Astrocyte of the cerebellum (primary cell): ENCODE measurements at regions of chr6 and their contacts with region 1.

Region 1: DNA sequence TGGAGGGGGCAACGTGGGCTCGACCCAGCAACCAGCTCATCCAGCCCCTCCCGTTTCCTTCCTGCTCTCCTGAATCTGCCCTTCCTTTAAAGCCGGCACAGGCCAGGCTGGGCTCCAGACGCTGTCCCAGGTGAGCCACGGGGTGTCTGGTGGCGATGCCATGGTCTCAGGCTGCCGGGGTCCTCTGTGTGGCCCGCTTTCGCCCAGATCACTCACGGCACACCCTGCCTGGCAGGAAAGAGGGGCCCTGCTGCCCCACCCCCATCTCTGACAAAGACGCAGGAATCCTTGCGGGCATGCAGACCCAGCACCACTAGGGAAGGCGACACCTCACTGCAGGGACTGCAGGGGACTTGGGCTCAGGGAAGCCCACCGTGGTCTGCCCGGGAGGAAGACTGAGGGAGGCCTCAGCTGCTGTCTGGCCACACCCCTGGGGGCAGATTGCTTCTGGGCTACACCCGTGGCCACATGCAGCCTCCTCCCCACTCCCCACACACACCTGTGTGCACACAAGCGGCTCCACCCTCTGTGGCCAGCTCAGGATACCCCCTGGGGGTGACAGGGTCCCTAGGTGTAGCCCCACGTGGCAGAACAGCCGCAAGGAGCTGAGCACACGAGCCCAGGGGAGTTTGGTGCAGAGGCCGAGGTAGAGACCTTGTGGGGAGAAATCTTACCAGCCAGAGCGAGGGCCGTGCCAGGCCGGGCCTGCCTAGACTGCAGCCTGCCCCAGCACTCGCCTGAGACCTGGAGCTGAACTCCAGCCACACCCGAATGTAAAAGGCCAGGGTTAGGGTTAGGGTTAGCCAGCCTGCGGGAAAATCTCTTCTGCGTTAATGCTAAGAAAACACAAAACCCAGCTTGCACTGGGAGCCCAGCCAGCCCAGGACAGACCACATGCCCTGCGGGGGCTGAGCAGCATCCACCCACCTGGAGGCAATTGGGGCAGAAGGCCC is 104.6 kb downstream of the DLL1 start:
- DNase-seq: no peak
- H3K4me3 ChIP-seq: no peak overlapping the region
- CTCF ChIP-seq: no peak

Region 2: GRCh38 chr6:170011204-170012036 is 174.9 kb before region 1 on chr6:
- in situ Hi-C with region 1: no loop called
- DNase-seq: no peak
- H3K4me3 ChIP-seq: no peak overlapping the region
- CTCF ChIP-seq: no peak

Region 3: DNA sequence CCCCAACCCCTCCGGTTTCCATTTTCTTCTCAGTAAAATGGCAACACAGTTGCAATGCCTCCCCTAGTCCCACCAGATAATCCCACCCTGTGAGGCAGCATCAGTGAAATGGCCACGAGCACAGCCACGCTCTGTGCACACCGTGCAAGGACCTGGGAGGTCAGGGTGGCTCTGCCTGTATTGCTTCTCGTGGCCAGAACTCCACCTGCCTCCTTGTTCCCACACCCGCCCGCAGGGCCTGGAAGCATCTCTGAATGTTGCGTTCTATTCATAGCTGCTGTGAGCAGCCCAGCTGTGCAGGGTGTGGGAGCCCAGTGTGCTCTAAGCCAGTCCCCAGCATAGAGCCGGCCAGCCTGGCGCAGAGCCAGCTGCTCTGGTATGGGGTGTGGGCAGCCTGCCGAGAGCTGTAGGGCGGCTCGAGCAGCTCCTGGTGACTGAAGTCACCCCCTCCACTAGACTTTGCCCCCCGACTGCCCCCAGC is 56.6 kb before region 1 on chr6:
- in situ Hi-C with region 1: loop called (anchors 5 kb)
- DNase-seq: no peak
- H3K4me3 ChIP-seq: no peak overlapping the region
- CTCF ChIP-seq: no peak

Region 4: GRCh38 chr6:170140124-170140523 is 46.2 kb before region 1 on chr6:
- in situ Hi-C with region 1: no loop called
- DNase-seq: no peak
- H3K4me3 ChIP-seq: no peak overlapping the region
- CTCF ChIP-seq: no peak

Region 5: DNA sequence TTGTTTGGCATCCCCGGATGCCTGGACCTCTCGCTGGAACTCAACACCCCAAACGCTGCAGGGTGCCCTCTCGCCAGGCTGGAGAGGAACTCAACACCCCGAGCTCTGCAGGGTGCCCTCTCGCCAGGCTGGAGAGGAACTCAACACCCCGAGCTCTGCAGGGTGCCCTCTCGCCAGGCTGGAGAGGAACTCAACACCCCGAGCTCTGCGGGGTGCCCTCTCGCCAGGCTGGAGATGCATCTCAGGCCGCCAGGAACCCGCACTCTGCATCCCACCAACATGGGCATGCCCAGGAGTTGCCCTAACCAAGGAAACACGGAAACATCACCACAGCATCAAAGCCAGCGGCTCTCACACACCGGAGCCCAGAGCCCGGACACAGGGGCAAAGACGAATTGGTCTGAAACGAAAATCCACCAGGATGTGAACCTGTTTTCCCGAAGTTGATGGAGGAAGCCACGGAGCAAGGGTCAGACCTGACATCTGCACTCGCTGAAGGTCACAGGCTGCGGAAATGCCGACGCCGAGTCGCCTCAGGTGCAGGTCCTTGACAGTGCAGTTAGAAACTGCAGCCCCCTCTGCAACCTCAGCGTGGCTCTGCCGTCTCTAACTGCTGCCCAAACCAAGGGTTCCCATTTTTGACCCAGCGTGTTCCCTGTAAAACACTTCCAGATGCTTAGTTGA is 67.1 kb after region 1 on chr6:
- in situ Hi-C with region 1: loop called (anchors 5 kb)
- DNase-seq: no peak
- H3K4me3 ChIP-seq: no peak overlapping the region
- CTCF ChIP-seq: no peak

Region 6: GRCh38 chr6:170271771-170272314 is 85.6 kb after region 1 on chr6:
- in situ Hi-C with region 1: no loop called
- DNase-seq: no peak
- H3K4me3 ChIP-seq: no peak overlapping the region
- CTCF ChIP-seq: no peak

Region 7: GRCh38 chr6:170388113-170388512 is 201.8 kb after region 1 on chr6:
- in situ Hi-C with region 1: no loop called
- DNase-seq: no peak
- H3K4me3 ChIP-seq: no peak overlapping the region
- CTCF ChIP-seq: no peak